ENCODE measurements at regions of chr17 and their contacts with region 1.

Region 1: GRCh38 chr17:77887464-77888241 is 70.8 kb upstream of the TNRC6C start:
- DNase-seq: peak; percentile 64 to 68
- ATAC-seq: peak; percentile 63 to 65
- H3K4me3 ChIP-seq: peak overlapping the region; percentile 49
- H3K27ac ChIP-seq: peak overlapping the region; percentile 15 to 73; a peak in 4 of 6 replicates
- H3K4me1 ChIP-seq: peaks cover 20% of the 10 kb centered on the region; the same call in 2 of the 3 replicates
- CTCF ChIP-seq: no peak
- EP300 ChIP-seq: no peak
- POLR2A ChIP-seq: no peak
- RAD21 ChIP-seq: no peak; a peak in 1 of 5 replicates

Region 2: DNA sequence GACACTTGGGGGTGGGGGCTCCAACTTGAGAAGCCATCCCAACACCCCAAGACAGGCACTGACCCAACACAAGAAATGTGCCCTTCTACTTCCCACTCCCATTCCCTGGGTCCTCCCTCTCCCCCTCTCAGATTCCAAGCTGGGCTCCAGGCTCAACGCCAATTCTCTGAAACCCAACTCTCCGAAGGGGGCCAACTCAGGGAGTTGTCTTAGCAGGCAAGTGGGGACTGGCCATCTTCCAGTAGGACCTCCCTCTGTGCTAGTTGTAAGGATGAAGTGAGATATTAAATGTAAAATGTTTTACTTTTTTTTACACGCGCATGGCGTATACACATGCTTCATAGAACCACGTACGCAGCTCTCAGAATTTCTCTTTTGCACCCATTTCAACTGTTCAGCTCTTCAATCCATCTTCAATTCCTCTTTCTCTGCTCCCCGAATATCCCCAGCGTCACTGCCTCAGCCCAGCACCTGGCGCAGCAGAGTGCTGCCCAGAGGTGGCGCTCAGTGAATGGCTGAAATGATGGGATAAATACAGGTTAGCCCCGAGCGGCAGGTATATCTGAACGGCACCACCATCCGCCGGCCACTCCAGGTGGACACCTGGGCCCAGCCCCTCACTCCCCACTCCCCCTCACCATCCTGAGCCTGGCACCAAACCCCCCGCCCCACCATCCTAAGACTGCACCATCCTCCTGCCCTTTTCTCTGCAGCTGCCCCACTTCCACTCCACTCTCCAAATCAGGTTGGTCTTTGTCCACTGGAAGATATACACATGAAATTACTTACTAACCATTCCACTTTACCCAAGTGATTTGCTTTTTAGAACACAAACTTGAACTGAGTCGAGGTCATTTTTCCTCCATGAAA is 27.0 kb after region 1 on chr17:
- CTCF ChIA-PET with region 1: interaction called, 10 read pairs
- POLR2A ChIA-PET with region 1: no interaction called
- DNase-seq: peak in 1 of 2 experiments; percentile 40
- ATAC-seq: peak; percentile 75 to 85
- H3K4me3 ChIP-seq: no peak overlapping the region
- H3K27ac ChIP-seq: no peak overlapping the region
- H3K4me1 ChIP-seq: peaks cover 8% of the 10 kb centered on the region; the same call in 1 of the 3 replicates
- CTCF ChIP-seq: 0 out of 3 replicates have a peak, but pooled peaks have one; percentile 21
- EP300 ChIP-seq: no peak
- POLR2A ChIP-seq: no peak
- RAD21 ChIP-seq: peak; percentile 26 to 42; a peak in 2 of 5 replicates